Posterior vena cava (tissue), 2 donors: ENCODE measurements at regions of chr19 and their contacts with region 1.

Region 1: DNA sequence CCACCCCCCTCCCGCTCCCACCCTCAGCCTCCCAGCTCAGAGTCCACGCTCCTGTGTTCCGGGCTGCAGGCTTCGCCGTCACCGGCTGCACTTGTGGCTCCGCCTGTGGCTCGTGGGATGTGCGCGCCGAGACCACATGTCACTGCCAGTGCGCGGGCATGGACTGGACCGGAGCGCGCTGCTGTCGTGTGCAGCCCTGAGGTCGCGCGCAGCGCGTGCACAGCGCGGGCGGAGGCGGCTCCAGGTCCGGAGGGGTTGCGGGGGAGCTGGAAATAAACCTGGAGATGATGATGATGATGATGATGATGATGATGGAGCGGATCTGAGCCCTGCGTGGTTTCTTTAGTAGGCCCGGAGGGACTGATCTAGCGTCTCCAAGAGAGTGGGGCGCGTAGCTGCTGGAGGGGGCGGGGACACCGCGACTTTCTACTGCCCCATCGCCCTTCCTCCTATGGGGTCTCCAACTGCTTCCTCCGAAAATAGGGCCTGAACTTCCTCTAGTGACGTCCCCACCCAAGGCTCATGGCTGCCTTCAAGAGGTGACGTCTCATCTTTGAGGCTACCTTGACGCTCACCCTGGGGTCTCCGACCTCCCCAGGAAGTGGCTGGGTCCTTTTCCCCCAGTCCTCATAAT is 1.4 kb downstream of the RETN start:
- DNase-seq: no peak

Region 2: GRCh38 chr19:7614859-7615741 is 55.2 kb before region 1 on chr19:
- intact Hi-C with region 1: loop called in 1 of 2 experiments (anchors 2 kb)
- DNase-seq: no peak

Region 3: GRCh38 chr19:7636691-7637373 is 33.4 kb before region 1 on chr19 and contains the start of gene STXBP2:
- intact Hi-C with region 1: no loop called
- DNase-seq: peak; percentile 92
- total RNA-seq, gene STXBP2: 22.5 to 32.4 TPM

Region 4: GRCh38 chr19:7933411-7933810 is 263.1 kb after region 1 on chr19:
- intact Hi-C with region 1: loop called in 1 of 2 experiments (anchors 2 kb)
- DNase-seq: no peak